ENCODE measurements at regions of chr2 and their contacts with region 1.

Region 1: GRCh38 chr2:66497431-66498288 is 62.7 kb downstream of the MEIS1 start:
- DNase-seq: no peak
- H3K4me3 ChIP-seq: no peak overlapping the region
- H3K27me3 ChIP-seq: no peaks in the 10 kb centered on the region
- CTCF ChIP-seq: no peak

Region 2: DNA sequence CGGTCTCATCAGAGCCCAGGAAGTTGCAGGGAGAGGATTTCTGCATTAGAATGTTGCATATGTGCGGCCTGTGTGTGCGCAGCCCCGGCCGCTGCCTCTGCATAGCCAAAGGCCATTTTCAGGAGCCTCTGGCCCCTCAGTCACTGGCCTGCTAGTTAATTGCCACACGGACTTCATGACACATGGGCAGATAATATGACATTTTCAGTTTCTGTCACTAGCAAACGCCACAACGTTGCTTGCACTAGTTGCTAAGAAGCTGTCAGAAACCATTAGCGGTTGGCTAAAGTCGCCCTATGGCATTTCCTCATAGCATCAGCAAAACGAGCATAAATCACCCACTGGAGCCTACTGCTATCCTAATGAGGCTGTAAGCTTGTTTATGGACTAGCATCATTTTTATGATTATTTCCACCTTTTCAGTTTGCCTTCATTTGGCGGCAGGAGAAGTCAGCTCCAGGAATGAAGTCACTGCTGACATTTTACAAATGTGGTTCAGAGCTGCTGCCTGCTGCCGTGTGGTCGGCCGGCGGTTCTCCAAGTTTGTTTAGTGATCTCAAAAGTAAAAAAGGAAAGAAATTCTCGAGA is 10.9 kb after region 1 on chr2:
- CTCF ChIA-PET with region 1: interaction called, 14 read pairs
- POLR2A ChIA-PET with region 1: interaction called, 3 read pairs
- DNase-seq: no peak
- H3K4me3 ChIP-seq: no peak overlapping the region
- H3K27me3 ChIP-seq: no peaks in the 10 kb centered on the region
- CTCF ChIP-seq: no peak

Region 3: GRCh38 chr2:66569321-66569851 is 71.7 kb after region 1 on chr2:
- CTCF ChIA-PET with region 1: no interaction called
- POLR2A ChIA-PET with region 1: no interaction called
- DNase-seq: no peak
- H3K4me3 ChIP-seq: no peak overlapping the region
- H3K27me3 ChIP-seq: no peaks in the 10 kb centered on the region
- CTCF ChIP-seq: no peak